ENCODE measurements at regions of chr11 and their contacts with region 1.

Region 1: GRCh38 chr11:66069715-66070603 is at the start of gene PACS1:
- DNase-seq: peak; percentile 64 to 85 (median 70)
- ATAC-seq: peak; percentile 85
- H3K4me3 ChIP-seq: peak within 1 kb of the TSS; percentile 69
- H3K4me3 Mint-ChIP-seq: peak within 1 kb of the TSS; percentile 91 to 100 (median 98)
- H3K27ac ChIP-seq: peak within 1 kb of the TSS; percentile 84
- H3K27ac Mint-ChIP-seq: peak within 1 kb of the TSS; percentile 90 to 99 (median 97)
- H3K4me1 ChIP-seq: peaks cover 23 to 24% of the 10 kb centered on the region in 2 donors
- H3K4me1 Mint-ChIP-seq: peaks cover 54 to 73% (median 63%) of the 10 kb centered on the region in 7 donors
- H3K27me3 ChIP-seq: no peaks in the 10 kb centered on the region
- H3K27me3 Mint-ChIP-seq: no peaks in the 10 kb centered on the region
- total RNA-seq, gene PACS1: 100 to 314 (median 252) TPM

Region 2: DNA sequence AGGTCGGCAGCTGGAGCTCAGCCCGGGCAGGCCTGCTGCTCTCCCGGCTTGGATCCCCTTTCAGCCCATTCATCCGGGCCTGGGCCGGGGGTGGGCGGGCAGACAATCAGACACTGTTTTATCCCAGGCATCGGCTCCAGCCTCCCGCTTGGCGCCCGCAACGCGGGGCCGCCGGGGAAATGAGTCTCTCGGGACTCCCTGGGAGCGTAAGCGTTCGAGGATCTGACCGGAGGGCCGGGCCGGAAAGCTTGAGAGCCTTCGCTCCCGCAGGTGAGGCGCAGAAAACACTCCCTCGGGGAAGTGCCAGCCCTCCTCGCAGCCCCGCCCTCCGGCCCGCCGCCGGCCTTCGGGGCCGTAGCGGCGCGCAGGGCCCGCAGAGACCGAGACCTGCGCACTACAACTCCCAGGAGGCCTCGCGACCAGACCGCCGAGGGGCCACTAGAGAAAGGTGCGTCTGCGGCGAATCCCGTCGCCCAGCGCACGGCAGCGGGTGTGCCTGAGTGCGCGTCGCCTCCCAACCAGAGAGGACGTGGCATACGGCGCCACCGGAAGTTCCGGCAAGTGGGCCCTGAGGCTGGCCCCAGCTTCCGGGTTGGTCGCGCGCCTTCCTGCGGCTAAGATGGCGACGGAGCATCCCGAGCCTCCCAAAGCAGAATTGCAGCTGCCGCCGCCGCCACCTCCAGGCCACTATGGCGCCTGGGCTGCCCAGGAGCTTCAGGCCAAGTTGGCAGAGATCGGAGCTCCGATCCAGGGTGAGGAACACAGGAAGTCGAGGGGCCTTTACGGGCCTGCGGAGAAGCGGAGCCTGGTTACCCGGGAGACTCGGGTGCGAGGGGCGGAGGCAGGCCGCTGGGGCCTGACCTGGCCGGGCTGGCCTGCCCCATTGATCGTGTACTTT is 17.9 kb before region 1 on chr11 and contains the start of gene SF3B2:
- CTCF ChIA-PET with region 1: interaction called, 36 read pairs
- POLR2A ChIA-PET with region 1: interaction called, 37 read pairs
- intact Hi-C with region 1: no loop called
- DNase-seq: peak; percentile 81 to 94 (median 93)
- ATAC-seq: peak; percentile 99
- H3K4me3 ChIP-seq: peak within 1 kb of the TSS; percentile 88
- H3K4me3 Mint-ChIP-seq: peak within 1 kb of the TSS; percentile 95 to 100 (median 98)
- H3K27ac ChIP-seq: peak within 1 kb of the TSS; percentile 93
- H3K27ac Mint-ChIP-seq: peak within 1 kb of the TSS; percentile 95 to 99 (median 98)
- H3K4me1 ChIP-seq: peaks cover 14 to 18% of the 10 kb centered on the region in 2 donors
- H3K4me1 Mint-ChIP-seq: peaks cover 17 to 44% (median 38%) of the 10 kb centered on the region in 7 donors
- H3K27me3 ChIP-seq: no peaks in the 10 kb centered on the region
- H3K27me3 Mint-ChIP-seq: peaks cover 0 to 9% (median 0%) of the 10 kb centered on the region in 5 donors
- total RNA-seq, gene SF3B2: 163 to 248 (median 206) TPM

Region 3: GRCh38 chr11:66100272-66101065 is 30.5 kb after region 1 on chr11:
- CTCF ChIA-PET with region 1: interaction called, 3 read pairs
- POLR2A ChIA-PET with region 1: interaction called, 45 read pairs
- intact Hi-C with region 1: loop called (anchors 1 to 5 kb)
- DNase-seq: peak; percentile 29 to 83 (median 80)
- ATAC-seq: peak; percentile 98
- H3K4me3 ChIP-seq: peak overlapping the region; percentile 55
- H3K4me3 Mint-ChIP-seq: peak overlapping the region; percentile 79 to 96 (median 86)
- H3K27ac ChIP-seq: peak overlapping the region; percentile 69
- H3K27ac Mint-ChIP-seq: peak overlapping the region; percentile 85 to 99 (median 94)
- H3K4me1 ChIP-seq: peaks cover 27 to 68% of the 10 kb centered on the region in 2 donors
- H3K4me1 Mint-ChIP-seq: peaks cover 50 to 88% (median 63%) of the 10 kb centered on the region in 7 donors
- H3K27me3 ChIP-seq: no peaks in the 10 kb centered on the region
- H3K27me3 Mint-ChIP-seq: no peaks in the 10 kb centered on the region

Region 4: GRCh38 chr11:66119348-66120133 is 49.6 kb after region 1 on chr11:
- CTCF ChIA-PET with region 1: interaction called, 28 read pairs
- POLR2A ChIA-PET with region 1: interaction called, 77 read pairs
- intact Hi-C with region 1: loop called in 1 of 2 experiments (anchors 1 kb)
- DNase-seq: no peak
- ATAC-seq: no peak
- H3K4me3 ChIP-seq: no peak overlapping the region
- H3K4me3 Mint-ChIP-seq: peak overlapping the region in 7 of 10 donors; percentile 10 to 81 (median 60)
- H3K27ac ChIP-seq: peak overlapping the region; percentile 32
- H3K27ac Mint-ChIP-seq: peak overlapping the region in 8 of 9 donors; percentile 53 to 90 (median 80)
- H3K4me1 ChIP-seq: peaks cover 51 to 79% of the 10 kb centered on the region in 2 donors
- H3K4me1 Mint-ChIP-seq: peaks cover 63 to 94% (median 88%) of the 10 kb centered on the region in 7 donors
- H3K27me3 ChIP-seq: no peaks in the 10 kb centered on the region
- H3K27me3 Mint-ChIP-seq: no peaks in the 10 kb centered on the region

Region 5: DNA sequence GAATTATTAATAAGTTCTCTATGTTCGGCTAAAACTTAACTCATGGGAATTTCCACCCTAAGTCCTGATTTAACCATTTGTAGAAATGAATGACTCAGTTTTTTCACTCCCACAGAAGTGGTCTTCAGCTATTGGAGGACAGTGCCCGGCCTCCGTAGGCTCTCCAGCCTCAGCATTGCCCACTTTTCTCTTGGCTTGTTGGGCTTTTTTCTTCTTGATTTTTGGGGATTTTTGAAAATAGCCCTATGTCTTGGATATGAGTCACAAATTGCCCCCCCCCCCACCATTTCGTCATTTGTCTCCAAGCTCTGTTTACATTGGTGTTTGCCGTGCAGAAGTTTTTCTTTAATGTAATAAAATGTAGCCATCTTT is 66.8 kb after region 1 on chr11:
- CTCF ChIA-PET with region 1: interaction called, 49 read pairs
- POLR2A ChIA-PET with region 1: interaction called, 9 read pairs
- intact Hi-C with region 1: loop called (anchors 1 kb)
- DNase-seq: no peak
- ATAC-seq: no peak
- H3K4me3 ChIP-seq: no peak overlapping the region
- H3K4me3 Mint-ChIP-seq: no peak overlapping the region
- H3K27ac ChIP-seq: no peak overlapping the region
- H3K27ac Mint-ChIP-seq: peak overlapping the region in 5 of 9 donors; percentile 6 to 75 (median 23)
- H3K4me1 ChIP-seq: peaks cover 0 to 4% of the 10 kb centered on the region in 2 donors
- H3K4me1 Mint-ChIP-seq: peaks cover 24 to 76% (median 65%) of the 10 kb centered on the region in 7 donors
- H3K27me3 ChIP-seq: no peaks in the 10 kb centered on the region
- H3K27me3 Mint-ChIP-seq: no peaks in the 10 kb centered on the region

Region 6: GRCh38 chr11:66222358-66223149 is 152.6 kb after region 1 on chr11:
- CTCF ChIA-PET with region 1: no interaction called
- POLR2A ChIA-PET with region 1: no interaction called
- intact Hi-C with region 1: no loop called
- DNase-seq: peak; percentile 79 to 95 (median 92)
- ATAC-seq: peak; percentile 100
- H3K4me3 ChIP-seq: no peak overlapping the region
- H3K4me3 Mint-ChIP-seq: peak overlapping the region in 4 of 10 donors; percentile 26 to 35 (median 32)
- H3K27ac ChIP-seq: peak overlapping the region; percentile 89
- H3K27ac Mint-ChIP-seq: peak overlapping the region; percentile 78 to 98 (median 92)
- H3K4me1 ChIP-seq: peaks cover 4 to 7% of the 10 kb centered on the region in 2 donors
- H3K4me1 Mint-ChIP-seq: peaks cover 12 to 21% (median 18%) of the 10 kb centered on the region in 7 donors
- H3K27me3 ChIP-seq: no peaks in the 10 kb centered on the region
- H3K27me3 Mint-ChIP-seq: no peaks in the 10 kb centered on the region

Region 7: GRCh38 chr11:67252831-67253239 is 1182.9 kb after region 1 on chr11:
- CTCF ChIA-PET with region 1: no interaction called
- POLR2A ChIA-PET with region 1: no interaction called
- intact Hi-C with region 1: no loop called
- DNase-seq: peak in 6 of 9 donors; percentile 40 to 50 (median 46)
- ATAC-seq: peak; percentile 82
- H3K4me3 ChIP-seq: no peak overlapping the region
- H3K4me3 Mint-ChIP-seq: peak overlapping the region in 2 of 10 donors; percentile 35 to 47
- H3K27ac ChIP-seq: peak overlapping the region; percentile 33
- H3K27ac Mint-ChIP-seq: peak overlapping the region in 8 of 9 donors; percentile 25 to 71 (median 49)
- H3K4me1 ChIP-seq: peaks cover 4 to 21% of the 10 kb centered on the region in 2 donors
- H3K4me1 Mint-ChIP-seq: peaks cover 20 to 59% (median 40%) of the 10 kb centered on the region in 7 donors
- H3K27me3 ChIP-seq: no peaks in the 10 kb centered on the region
- H3K27me3 Mint-ChIP-seq: no peaks in the 10 kb centered on the region